Activated naive CD4-positive, alpha-beta T cell treated with anti-CD3 and anti-CD28 coated beads for 36 hours (primary cell): ENCODE measurements at regions of chr5 and their contacts with region 1.

Region 1: DNA sequence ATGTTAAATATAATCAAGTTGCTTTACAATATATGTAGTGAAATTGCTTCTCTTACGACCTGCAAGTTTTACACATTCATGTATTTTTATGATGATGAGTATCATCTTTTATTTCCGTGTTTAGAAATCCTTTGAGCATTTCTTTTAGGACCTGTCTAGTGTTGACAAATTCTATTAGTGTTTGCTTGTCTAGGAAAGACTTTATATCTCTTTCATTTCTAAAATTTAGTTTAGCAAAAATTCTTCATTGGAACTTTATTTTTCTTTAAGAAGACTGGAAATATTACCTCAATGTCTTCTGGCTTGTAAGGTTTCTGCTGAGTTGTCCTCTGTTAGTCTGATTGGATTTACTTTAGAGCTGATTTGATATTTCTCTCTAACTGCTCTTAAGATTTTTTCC is 920.9 kb upstream of the CTNND2 start:
- DNase-seq: no peak
- H3K4me3 Mint-ChIP-seq: no peak overlapping the region
- H3K27ac Mint-ChIP-seq: no peak overlapping the region
- H3K4me1 Mint-ChIP-seq: no peaks in the 10 kb centered on the region
- H3K27me3 Mint-ChIP-seq: no peaks in the 10 kb centered on the region

Region 2: DNA sequence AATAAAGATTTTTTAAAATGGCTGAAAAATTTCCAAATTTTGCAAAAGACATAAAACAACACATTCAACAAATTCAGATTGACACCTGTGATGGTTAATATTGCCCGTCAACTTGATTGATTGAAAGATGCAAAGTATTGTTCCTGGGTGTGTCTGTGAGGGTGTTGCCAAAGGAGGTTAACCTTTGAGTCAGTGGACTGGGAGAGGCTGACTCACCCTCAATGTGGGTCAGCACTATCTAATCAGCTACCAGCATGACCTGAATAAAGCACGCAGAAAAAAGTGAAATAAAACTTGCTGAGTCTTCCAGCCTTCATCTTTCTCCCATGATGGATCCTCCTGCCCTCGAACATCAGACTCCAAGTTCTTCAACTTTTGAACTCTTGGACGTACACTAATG is 52.9 kb before region 1 on chr5:
- CTCF ChIA-PET with region 1: no interaction called
- intact Hi-C with region 1: no loop called
- DNase-seq: no peak
- H3K4me3 Mint-ChIP-seq: no peak overlapping the region
- H3K27ac Mint-ChIP-seq: no peak overlapping the region
- H3K4me1 Mint-ChIP-seq: no peaks in the 10 kb centered on the region
- H3K27me3 Mint-ChIP-seq: no peaks in the 10 kb centered on the region

Region 3: GRCh38 chr5:12805165-12805707 is 19.9 kb before region 1 on chr5:
- CTCF ChIA-PET with region 1: no interaction called
- intact Hi-C with region 1: loop called (anchors 1 kb)
- DNase-seq: no peak
- H3K4me3 Mint-ChIP-seq: no peak overlapping the region
- H3K27ac Mint-ChIP-seq: no peak overlapping the region
- H3K4me1 Mint-ChIP-seq: no peaks in the 10 kb centered on the region
- H3K27me3 Mint-ChIP-seq: no peaks in the 10 kb centered on the region